ENCODE measurements at regions of chr20 and their contacts with region 1.

Region 1: GRCh38 chr20:2470423-2471193 is at the start of gene SNRPB:
- DNase-seq: peak; percentile 92
- H3K4me3 ChIP-seq: peak within 1 kb of the TSS; percentile 86 to 89
- H3K27ac ChIP-seq: peak within 1 kb of the TSS; percentile 86 to 96
- H3K4me1 ChIP-seq: peaks cover 15 to 21% of the 10 kb centered on the region in 2 experiments
- H3K27me3 ChIP-seq: no peaks in the 10 kb centered on the region
- CTCF ChIP-seq: no peak
- EP300 ChIP-seq: peak in 1 of 2 experiments; percentile 51; a peak in 1 of 4 replicates
- RAD21 ChIP-seq: peak; percentile 4; the same call in 1 of the 2 replicates
- polyA plus RNA-seq, gene SNRPB: 380 and 455 TPM in 2 replicates

Region 2: GRCh38 chr20:2451939-2452732 is 18.5 kb before region 1 on chr20:
- CTCF ChIA-PET with region 1: interaction called, 19 read pairs
- POLR2A ChIA-PET with region 1: interaction called, 3 read pairs
- DNase-seq: peak; percentile 64
- H3K4me3 ChIP-seq: no peak overlapping the region
- H3K27ac ChIP-seq: no peak overlapping the region
- H3K4me1 ChIP-seq: no peaks in the 10 kb centered on the region; a peak in 1 of 4 replicates
- H3K27me3 ChIP-seq: no peaks in the 10 kb centered on the region
- CTCF ChIP-seq: peak; percentile 82
- EP300 ChIP-seq: no peak
- RAD21 ChIP-seq: peak; percentile 79

Region 3: DNA sequence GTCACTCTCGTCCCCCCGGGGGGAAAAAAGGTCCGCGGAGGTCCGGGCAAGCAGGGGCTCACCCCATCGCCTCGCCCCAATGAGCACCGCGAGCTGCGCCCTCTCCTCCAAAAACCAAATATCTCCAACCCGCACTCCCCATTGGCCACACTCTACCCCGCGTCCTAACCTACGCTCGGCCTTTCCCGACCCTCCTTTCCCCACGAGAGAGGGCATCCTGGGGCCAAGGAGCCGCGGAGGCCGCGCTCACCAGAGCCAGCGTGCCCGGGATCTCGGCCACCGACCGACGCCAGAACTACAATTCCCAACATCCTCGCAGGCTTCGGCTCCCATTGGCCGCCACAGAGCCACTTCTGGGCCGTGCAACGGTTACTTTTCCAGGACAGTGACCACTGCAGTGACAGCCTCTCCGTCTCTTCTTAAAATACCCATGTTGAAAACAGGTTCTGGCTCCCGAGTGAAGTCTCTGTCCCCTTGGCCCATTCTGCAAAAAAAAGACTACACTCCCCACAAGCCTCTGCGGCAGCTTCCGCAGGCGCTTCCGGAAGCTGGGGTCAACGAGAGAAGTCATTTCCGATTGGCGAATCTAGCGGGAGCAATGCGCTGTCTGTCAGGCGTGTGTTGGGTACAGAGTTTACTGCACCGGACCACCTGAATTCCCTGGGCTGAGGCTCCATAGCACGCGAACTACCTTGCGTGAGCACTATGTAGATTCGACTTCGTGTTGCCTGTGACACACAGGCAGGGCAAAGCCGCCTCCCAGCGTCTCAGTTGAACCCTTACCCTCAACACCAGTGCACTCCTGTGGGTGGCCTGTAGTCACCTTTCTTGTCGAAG is 38.2 kb after region 1 on chr20 and contains the start of gene ZNF343:
- CTCF ChIA-PET with region 1: no interaction called
- POLR2A ChIA-PET with region 1: interaction called, 10 read pairs
- DNase-seq: peak; percentile 86
- H3K4me3 ChIP-seq: peak within 1 kb of the TSS; percentile 76 to 84
- H3K27ac ChIP-seq: peak within 1 kb of the TSS; percentile 56 to 95
- H3K4me1 ChIP-seq: peaks cover 2 to 12% of the 10 kb centered on the region in 2 experiments; a peak in 2 of 4 replicates
- H3K27me3 ChIP-seq: no peaks in the 10 kb centered on the region
- CTCF ChIP-seq: no peak
- EP300 ChIP-seq: no peak; a peak in 1 of 4 replicates
- RAD21 ChIP-seq: no peak
- polyA plus RNA-seq, gene ZNF343: 11.0 and 16.8 TPM in 2 replicates

Measured in SK-N-SH (cell line).